Sciatic nerve (tissue), 2 donors: ENCODE measurements at regions of chr20 and their contacts with region 1.

Region 1: GRCh38 chr20:46784436-46785127 is 75.1 kb downstream of the SLC2A10 start:
- DNase-seq: no peak
- ATAC-seq: peak; percentile 90

Region 2: GRCh38 chr20:45998761-45999160 is 785.8 kb before region 1 on chr20:
- intact Hi-C with region 1: loop called (anchors 5 kb)
- DNase-seq: no peak
- ATAC-seq: peak; percentile 68